AG04450 (cell line): ENCODE measurements at regions of chr6 and their contacts with region 1.

Region 1: GRCh38 chr6:110873981-110874879 is at the start of gene AMD1:
- DNase-seq: peak; percentile 96
- H3K4me3 ChIP-seq: peak within 1 kb of the TSS; percentile 88
- H3K27ac ChIP-seq: peak within 1 kb of the TSS; percentile 96
- H3K27me3 ChIP-seq: no peaks in the 10 kb centered on the region
- CTCF ChIP-seq: no peak
- polyA plus RNA-seq, gene AMD1: 58.0 and 84.5 TPM in 2 replicates

Region 2: DNA sequence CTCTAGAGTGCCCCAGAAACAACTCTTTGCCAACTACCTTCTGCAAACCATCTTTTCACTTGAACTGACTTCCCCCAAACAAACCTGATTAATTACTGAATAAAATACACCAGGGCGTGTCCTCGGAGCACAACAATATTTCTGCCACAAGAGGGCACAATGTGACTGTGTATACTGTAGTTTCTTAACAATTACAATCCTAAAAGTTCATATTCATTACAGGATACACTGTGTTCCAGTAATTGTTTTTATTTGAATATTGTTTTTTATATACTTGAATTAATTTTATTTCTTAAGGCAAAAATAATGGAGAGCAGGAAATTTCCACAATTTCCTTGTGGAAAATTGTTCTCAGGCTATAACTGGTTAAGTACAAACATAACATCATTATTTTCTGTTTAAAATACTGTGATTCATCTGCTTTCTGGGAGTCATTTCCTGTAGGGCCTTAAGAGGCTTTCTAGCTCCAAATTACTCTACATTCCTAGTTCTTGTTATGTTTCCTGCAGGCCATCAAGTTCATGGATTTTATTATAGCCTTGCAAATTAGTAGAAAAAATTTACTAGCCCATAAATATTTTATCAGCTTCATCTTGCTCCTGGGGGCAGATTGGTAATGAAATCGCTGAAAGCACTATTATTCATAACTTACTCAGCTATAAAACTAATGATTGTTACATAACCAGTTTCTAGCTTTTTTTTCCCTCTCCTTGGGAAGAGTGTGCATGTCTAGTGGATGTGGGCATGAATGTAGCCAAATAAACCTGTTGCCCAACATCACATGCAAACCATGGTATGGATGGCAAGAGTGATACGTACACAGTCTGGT is 345.9 kb before region 1 on chr6:
- CTCF ChIA-PET with region 1: interaction called, 19 read pairs
- POLR2A ChIA-PET with region 1: interaction called, 7 read pairs
- DNase-seq: no peak
- H3K4me3 ChIP-seq: no peak overlapping the region
- H3K27ac ChIP-seq: peak overlapping the region; percentile 69
- H3K27me3 ChIP-seq: no peaks in the 10 kb centered on the region
- CTCF ChIP-seq: peak; percentile 72

Region 3: DNA sequence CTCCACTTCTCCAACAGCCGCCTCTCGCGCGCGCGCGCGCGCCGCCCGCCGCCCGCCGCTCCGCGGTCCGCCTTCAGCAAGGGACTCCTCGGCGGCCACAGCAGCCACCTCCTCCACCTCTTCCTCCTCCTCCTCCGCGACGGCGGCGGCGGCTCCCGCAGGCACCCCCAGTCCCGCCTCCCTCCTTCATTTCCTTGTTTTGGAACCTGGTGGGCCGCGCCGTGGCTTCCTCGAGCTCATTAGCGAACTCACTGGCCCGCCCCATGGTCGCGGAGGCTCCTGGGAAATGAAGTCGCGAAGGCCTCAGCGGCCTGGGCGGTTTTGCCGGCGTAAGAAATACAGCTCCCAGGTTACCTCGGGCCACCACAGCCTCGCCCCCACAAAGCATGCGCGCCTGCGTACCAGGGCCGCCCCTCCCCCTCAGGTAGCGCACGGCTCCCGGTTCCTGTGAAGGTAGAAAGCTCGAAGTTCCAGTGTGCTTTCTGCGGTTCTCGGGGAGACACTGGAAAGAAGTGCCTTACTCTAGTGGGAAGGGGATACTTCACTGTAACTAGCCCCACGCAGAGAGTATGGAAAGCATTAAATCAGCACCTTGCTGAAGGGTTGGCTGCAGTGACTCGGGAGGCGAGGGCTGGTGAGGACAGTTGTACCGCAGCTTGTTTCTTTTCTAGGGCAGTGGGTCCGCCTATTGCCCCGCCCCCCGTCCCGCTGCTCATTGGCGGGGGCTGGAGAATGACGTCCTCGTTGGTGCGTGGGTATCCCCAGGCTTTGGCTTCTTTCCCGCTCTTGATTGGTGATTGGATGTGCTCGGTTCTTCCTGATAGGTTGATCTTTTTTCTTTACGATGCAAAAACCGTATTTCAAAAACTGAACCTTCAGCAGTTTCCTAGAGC is 58.8 kb before region 1 on chr6 and contains the start of gene CDK19:
- CTCF ChIA-PET with region 1: interaction called, 8 read pairs
- POLR2A ChIA-PET with region 1: interaction called, 142 read pairs
- DNase-seq: peak; percentile 92
- H3K4me3 ChIP-seq: peak within 1 kb of the TSS; percentile 94
- H3K27ac ChIP-seq: peak within 1 kb of the TSS; percentile 99
- H3K27me3 ChIP-seq: no peaks in the 10 kb centered on the region
- CTCF ChIP-seq: no peak
- polyA plus RNA-seq, gene CDK19: 15.1 and 21.4 TPM in 2 replicates

Region 4: DNA sequence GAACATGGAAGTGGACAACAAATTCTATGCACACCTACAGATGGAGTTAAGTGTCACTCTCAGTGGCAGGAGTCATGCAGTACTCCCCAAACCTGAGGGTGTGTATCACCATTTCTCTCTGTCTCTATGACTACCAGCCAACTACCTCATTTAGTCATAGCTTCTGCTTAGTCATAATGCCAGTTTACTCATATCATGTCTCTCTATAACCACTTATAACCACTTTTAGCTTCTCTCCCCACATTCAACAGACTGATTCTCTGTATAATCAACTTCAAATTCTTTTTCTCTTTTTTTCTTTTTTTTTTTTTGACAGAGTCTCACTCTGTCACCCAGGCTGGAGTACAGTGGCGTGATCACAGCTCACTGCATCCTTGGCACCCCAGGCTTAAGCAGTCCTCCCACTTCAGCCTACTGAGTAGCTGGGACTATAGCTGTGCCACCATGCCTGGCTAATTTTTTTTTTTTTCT is 70.5 kb after region 1 on chr6:
- CTCF ChIA-PET with region 1: interaction called, 3 read pairs
- POLR2A ChIA-PET with region 1: interaction called, 10 read pairs
- DNase-seq: peak; percentile 34
- H3K4me3 ChIP-seq: no peak overlapping the region
- H3K27ac ChIP-seq: peak overlapping the region; percentile 39
- H3K27me3 ChIP-seq: no peaks in the 10 kb centered on the region
- CTCF ChIP-seq: no peak

Region 5: DNA sequence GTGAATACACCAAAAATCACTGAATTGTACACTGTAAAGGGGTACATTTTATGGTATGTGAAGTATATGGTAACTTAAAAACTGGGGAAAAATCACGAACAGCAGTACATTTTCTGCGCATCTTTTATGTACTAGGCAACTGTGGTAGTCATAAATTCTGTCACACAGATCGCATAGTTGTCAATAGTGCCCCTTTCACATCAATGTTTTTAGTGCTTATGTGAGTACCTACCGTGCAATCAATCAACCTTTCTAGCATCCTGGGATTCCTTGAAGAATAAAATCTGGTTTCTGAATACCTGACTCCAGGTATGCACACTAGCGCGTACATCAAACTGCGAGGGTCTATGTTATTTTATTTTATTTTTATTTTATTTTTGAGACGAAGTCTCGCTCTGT is 107.0 kb after region 1 on chr6:
- CTCF ChIA-PET with region 1: no interaction called
- POLR2A ChIA-PET with region 1: interaction called, 19 read pairs
- DNase-seq: no peak
- H3K4me3 ChIP-seq: peak overlapping the region; percentile 99
- H3K27ac ChIP-seq: peak overlapping the region; percentile 82
- H3K27me3 ChIP-seq: no peaks in the 10 kb centered on the region
- CTCF ChIP-seq: no peak

Region 6: DNA sequence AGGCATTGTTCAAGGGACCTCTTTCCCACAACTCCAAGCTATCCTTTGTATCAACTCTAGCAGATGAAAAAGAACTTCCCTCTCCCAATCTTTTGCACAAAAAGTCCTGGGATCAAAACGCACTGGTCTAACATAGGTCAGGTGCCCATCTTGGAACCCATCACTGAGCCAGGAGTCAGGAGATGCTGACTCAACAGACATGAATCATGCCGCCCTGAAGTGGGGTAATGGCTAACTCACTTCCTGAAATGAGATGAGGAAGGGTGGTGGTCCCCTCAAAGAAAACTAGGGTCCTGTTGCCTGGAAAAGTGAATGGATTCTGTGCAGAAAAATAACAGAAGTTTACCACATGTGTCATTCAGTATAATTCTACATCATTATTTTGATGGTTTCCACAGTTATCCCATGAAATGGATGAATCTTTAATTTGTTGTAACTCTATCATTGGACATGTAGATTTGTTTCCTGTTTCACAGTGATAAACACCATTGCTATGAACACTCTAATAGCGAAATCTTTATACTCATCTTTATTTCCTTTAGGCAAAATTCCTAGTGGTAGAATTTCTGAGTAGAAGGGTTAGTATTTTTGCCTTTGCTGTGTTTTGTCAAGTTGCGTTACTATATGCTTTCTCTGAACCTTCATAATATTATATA is 364.4 kb after region 1 on chr6:
- CTCF ChIA-PET with region 1: no interaction called
- POLR2A ChIA-PET with region 1: no interaction called
- DNase-seq: no peak
- H3K4me3 ChIP-seq: no peak overlapping the region
- H3K27ac ChIP-seq: no peak overlapping the region
- H3K27me3 ChIP-seq: no peaks in the 10 kb centered on the region
- CTCF ChIP-seq: no peak

Region 7: GRCh38 chr6:111642463-111643158 is 768.4 kb after region 1 on chr6:
- CTCF ChIA-PET with region 1: no interaction called
- POLR2A ChIA-PET with region 1: no interaction called
- DNase-seq: peak; percentile 29
- H3K4me3 ChIP-seq: no peak overlapping the region
- H3K27ac ChIP-seq: no peak overlapping the region
- H3K27me3 ChIP-seq: no peaks in the 10 kb centered on the region
- CTCF ChIP-seq: peak; percentile 71